ENCODE measurements at regions of chr1 and their contacts with region 1.

Region 1: DNA sequence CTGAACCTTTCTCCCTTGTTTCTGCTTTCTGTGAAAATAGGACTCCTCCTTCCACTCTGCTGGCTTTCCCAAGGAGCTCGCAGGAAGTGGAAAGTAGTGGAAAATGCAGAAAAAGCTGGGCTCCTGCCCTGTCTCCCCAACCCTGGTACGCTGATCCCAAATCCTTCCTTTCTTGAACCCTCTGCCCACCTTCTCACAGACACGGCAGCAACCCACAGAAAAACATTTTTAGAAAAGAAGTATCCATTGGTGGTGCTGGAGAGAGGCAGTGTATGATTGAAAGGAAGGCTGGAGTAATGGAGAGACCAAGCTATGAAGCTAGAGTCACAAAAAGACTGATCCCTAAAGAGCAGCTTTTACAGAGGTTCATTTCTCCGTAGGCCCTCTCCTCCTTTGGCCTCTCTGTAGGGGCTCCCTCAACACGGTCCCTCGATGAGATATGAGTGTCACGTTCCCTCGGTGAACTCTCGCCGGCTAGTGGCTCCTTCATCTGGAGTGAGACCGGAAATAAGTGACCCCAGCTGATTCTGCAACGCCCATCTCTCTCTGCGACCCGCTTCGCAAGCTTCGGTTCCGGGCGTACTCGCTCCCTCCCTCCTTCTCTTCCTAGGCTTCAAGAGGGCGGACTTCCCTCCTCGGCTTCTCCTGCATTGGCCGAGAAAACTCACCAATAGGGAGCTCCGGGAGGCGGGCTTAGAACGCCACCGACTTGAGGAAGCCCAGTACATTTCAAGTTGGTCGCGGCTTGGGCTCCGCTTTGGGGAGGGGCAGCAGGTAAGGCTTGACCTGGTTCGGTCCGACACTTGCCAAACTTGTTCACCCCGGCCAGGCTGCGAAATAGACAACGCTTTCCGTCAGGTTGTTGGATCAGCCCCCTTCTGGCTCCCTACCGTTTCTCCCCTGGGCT is at the starts of genes ANKRD34A and POLR3GL:
- DNase-seq: peak; percentile 98
- total RNA-seq, gene ANKRD34A: 2.9 TPM
- total RNA-seq, gene POLR3GL: 36.8 TPM

Region 2: DNA sequence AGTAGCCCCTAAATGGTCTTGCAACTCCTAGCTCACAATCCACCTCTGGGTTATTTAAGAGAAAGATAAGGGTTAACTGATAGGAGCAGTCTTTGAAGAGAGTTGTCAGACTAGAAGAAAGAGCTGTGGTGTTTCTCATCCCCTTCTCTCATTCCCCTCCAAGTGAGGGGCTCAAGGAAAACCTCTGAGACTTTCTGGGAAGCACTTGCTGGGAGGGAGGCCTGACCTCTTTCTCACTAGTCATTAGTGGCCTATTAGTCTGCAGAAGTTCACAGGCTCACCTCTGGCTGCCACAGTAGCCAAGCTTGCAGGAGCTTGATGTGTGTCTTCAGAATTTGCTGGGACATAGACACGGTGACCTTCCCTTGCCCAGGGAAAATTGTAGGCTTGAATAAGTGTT is 362.7 kb before region 1 on chr1:
- intact Hi-C with region 1: no loop called
- DNase-seq: no peak

Region 3: GRCh38 chr1:145823565-145824498 is 140.4 kb before region 1 on chr1 and contains the starts of genes POLR3C and RNF115:
- intact Hi-C with region 1: no loop called
- DNase-seq: peak; percentile 95
- total RNA-seq, gene POLR3C: 14.0 TPM
- total RNA-seq, gene RNF115: 74.5 TPM

Region 4: GRCh38 chr1:145927063-145927886 is 37.0 kb before region 1 on chr1 and contains the start of gene RBM8A:
- intact Hi-C with region 1: loop called (anchors 2 kb)
- DNase-seq: peak; percentile 96
- total RNA-seq, gene RBM8A: 74.2 TPM

Region 5: DNA sequence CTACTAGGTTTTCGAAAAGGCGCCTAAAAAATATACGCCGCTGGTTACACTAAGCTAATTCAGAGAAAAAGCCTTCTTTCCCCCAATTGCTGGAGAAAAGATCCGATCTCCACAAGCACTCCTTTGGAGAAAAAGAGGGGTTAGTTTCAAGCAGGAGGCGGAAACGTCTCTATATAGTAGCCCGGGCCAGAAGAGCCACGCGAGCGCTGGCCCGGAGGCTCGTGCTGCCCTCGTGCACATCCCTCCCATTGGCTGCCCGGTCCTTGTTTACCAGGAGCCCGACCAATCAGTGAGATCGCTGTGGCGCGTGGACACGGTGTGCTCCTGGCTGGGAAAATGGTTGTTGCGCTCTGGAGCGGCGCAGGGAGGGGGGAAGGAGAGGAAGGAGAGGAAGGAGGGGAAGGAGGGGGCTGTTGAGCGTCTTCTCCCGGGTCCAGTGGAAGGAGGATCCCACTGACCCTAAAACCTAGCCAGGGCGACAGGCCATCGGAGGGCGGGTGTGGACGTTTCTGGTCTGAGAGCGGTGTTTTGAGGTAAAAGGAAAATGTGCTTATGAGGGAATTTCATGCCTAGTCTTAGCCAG is 32.3 kb after region 1 on chr1 and contains the start of gene TXNIP:
- intact Hi-C with region 1: loop called (anchors 5 kb)
- DNase-seq: peak; percentile 100
- total RNA-seq, gene TXNIP: 689 TPM

Region 6: DNA sequence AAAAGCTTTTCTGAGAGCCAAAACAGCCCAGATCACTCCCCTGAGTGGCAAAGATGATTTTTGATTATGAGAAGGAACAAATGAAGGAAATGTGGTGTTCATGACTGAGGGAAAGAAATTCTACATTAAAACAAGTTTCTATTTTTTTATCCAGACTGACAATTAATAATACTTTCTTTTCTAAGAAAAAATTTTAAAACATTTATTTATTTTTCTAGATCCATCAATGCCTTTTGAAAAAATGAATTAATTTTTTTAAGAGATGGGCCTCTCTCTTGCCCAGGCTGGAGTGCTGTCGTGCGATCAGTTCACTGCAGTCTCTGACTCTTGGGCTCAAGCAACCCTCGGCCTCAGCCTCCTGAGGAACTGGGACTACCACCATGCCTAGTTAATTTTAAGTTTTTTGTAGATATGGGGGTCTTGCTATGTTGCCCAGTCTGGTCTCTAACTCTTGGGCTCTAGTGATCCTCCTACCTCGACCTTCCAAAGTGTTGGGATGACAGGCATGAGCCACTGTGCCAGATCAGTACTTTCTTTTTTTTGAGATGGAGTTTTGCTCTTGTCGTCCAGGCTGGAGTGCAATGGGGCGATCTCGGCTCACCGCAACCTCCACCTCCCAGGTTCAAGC is 43.4 kb after region 1 on chr1:
- intact Hi-C with region 1: no loop called
- DNase-seq: no peak

Region 7: DNA sequence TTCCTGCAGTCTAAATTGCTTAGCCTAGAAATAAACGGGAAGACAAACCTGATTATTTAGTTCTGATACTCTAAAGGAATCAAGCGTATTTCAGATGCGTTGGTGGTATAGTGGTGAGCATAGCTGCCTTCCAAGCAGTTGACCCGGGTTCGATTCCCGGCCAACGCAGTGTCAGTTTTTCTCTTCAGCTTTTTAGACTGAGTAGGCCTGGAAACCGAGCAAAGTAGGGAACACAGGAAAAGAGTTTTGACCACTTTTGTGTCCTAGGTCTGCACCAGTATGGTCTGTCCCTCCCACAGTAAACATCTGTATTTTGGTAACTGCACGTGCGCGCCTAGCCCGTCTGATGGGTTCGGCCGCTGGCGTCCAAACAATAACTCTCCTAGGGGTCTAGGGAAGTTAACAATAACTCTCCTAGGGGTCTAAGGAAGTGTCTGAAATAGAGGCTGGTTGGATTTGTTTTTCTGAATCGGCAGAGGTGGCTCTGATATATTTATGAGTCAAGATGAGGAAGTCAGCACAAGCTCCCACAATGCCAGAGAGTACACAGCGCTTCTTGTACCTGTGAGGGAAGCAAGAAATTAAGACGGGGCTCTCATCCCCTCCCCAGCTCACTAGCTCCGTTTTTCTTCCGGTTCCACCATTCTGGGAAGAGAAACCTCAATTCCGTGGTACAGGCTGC is 72.9 kb after region 1 on chr1:
- intact Hi-C with region 1: no loop called
- DNase-seq: no peak

Measured in cardiac septum (tissue), 1 donor.